Left ventricle myocardium superior (tissue), 1 donor: ENCODE measurements at regions of chr2 and their contacts with region 1.

Region 1: DNA sequence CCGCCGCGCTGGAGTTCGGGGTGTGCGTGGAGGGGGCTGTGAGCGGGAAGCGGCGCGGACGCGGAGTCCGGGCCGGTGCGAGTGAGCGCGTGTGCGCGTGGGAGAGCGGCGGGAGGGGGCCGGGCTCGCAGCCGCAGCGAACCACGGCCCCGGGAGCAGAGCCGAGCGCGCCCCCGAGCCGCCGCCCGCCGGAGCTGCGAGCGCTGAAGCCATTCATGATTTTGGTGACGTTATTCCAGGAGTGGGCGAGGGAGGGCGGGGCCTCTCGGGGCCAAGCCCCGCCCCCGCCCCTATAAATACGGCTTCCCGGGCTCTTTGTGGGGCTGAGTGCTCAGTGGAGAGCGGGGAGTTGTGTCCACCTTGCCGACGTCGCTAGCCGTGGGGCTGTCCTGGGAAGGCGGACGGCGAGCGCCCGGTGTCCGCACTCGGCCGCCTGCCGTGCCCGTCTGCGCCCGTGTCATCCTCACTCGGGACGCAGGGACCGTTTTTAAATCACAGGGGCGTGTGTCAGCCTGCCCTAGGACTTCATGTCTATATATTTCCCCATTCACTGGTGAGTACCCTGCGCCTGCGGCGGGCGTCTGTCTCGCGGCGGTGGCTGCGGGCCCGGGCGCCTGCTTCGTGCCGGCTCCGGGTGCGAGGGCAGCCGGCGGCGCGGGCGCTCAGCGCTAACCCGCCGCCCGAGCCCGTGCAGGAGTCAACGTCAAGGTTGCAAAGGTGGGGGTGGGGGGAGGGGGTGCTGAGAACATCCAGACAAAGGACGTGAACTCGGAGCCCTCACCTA is at the start of gene LBH:
- DNase-seq: peak; percentile 94
- ATAC-seq: peak; percentile 85
- total RNA-seq, gene LBH: 129 TPM

Region 2: DNA sequence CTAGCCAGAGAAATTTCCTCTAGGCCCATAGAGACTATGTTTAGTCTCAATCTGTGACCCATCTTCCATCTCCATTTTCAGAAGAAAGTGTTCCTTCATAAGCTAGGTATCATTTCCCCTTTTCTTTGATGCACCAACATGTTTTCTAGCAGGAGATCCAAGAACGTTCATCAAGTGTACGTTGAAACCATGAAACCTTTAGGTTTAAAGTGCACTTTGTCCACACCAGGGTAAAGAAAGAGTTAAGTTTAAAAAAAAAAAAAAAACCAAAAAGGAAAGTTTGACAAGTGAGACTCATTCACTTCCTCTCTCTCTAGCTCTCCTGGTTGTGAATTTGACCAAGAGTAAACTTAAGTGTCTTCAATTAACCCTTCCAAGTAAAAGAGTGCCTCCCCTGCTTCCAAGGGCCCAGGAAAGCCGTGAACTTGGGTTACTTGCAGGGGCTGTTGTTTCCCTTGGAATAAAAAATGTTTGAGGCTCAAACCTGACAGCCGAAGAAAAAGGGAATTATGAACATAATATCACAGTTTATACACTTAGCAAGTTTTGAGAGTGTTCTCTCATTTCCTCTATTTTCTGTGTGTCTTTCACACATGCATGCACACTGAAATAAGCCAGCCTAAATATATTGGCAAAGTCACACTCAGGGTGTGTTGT is 56.6 kb after region 1 on chr2:
- intact Hi-C with region 1: no loop called
- DNase-seq: no peak
- ATAC-seq: no peak

Region 3: GRCh38 chr2:30346471-30347169 is 115.2 kb after region 1 on chr2:
- intact Hi-C with region 1: loop called (anchors 10 kb)
- DNase-seq: peak; percentile 87
- ATAC-seq: peak; percentile 98

Region 4: GRCh38 chr2:30776831-30777635 is 545.6 kb after region 1 on chr2:
- intact Hi-C with region 1: no loop called
- DNase-seq: no peak
- ATAC-seq: no peak